Activated naive CD4-positive, alpha-beta T cell treated with anti-CD3 and anti-CD28 coated beads for 36 hours (primary cell): ENCODE measurements at regions of chr5 and their contacts with region 1.

Region 1: DNA sequence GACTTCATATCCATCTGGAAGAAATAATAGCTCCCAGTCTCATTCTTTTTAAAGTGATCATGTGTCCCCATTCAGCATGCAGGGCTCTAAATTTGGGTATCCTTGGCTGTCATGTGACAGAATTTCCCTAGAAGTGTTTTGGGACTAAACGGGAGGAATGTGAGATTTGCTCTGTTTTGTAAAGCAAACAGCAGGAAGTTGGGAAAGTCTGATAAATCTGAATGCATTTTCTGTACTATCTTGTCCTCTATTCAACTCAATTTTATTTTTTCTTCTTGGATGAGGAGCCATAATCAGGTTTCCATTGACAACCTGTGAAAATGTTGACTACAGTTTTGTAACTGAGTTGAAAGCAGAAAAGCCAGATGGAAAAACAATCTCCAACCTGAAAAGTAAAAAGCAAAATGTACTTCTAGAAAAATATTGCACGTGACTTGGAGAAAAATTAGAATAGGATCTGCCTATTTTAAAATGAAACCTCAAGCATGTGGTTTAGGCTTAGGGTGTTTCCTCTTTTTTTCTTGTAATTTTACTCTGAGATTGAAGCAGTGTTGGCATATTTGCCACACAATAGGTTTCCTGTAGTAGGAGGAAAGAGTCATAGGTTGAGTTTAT is 76.2 kb upstream of the IL6ST start:
- DNase-seq: no peak
- H3K4me3 Mint-ChIP-seq: peak overlapping the region; percentile 59
- H3K27ac Mint-ChIP-seq: peak overlapping the region; percentile 82
- H3K4me1 Mint-ChIP-seq: peaks cover 86% of the 10 kb centered on the region
- H3K27me3 Mint-ChIP-seq: no peaks in the 10 kb centered on the region

Region 2: DNA sequence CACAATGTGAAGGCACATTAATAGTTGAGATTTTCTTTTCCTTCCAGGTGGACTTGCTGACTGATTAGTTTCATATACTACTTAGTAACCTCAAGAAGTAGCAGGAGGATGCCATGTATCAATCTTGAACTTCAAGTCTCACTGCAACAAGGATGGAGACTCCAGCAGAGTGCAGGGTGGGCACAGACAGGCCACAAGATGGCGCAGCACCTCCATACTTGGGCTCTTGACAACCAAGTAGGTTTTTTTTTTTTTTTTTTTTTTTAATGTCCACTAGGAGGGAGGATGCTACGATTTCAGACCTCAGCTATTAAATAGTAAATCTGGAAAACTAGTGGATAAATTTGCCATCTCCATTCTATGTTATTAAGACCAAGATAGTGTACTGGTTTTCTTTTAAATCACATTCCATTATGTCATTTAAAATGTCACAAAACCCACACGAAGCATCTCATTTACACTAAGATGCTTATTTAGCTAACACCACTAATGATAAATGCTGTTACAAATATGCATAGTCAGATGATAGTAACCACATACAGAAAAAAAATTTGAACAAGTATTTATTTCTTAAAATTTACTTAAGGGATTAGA is 134.8 kb before region 1 on chr5:
- CTCF ChIA-PET with region 1: interaction called, 9 read pairs
- intact Hi-C with region 1: loop called (anchors 2 kb)
- DNase-seq: peak; percentile 93
- H3K4me3 Mint-ChIP-seq: no peak overlapping the region
- H3K27ac Mint-ChIP-seq: no peak overlapping the region
- H3K4me1 Mint-ChIP-seq: peaks cover 15% of the 10 kb centered on the region
- H3K27me3 Mint-ChIP-seq: no peaks in the 10 kb centered on the region

Region 3: DNA sequence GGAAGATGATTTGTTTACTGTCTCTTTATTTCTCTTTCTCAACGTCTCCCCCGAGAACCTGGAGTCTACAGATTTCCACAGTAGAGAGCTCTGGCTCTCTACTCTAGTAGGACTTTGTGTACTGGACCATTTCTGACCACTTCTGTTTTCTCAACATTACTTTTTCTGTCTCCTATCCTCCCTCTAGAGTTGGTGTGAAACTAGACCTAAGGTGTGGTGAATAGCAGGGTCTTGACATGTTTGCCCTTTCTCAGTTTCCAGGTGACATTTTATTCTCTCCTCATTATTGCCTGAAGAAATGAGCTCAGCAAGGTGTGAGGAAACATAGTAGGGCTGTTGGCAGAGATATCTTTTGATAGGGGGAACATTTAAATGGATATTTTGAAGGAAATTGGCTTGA is 14.1 kb before region 1 on chr5:
- CTCF ChIA-PET with region 1: interaction called, 5 read pairs
- intact Hi-C with region 1: loop called (anchors 1 kb)
- DNase-seq: no peak
- H3K4me3 Mint-ChIP-seq: peak overlapping the region; percentile 56
- H3K27ac Mint-ChIP-seq: peak overlapping the region; percentile 81
- H3K4me1 Mint-ChIP-seq: peaks cover 73% of the 10 kb centered on the region
- H3K27me3 Mint-ChIP-seq: no peaks in the 10 kb centered on the region

Region 4: GRCh38 chr5:56088967-56089829 is 18.2 kb after region 1 on chr5:
- CTCF ChIA-PET with region 1: interaction called, 3 read pairs
- intact Hi-C with region 1: loop called (anchors 1 kb)
- DNase-seq: peak; percentile 85
- H3K4me3 Mint-ChIP-seq: no peak overlapping the region
- H3K27ac Mint-ChIP-seq: peak overlapping the region; percentile 86
- H3K4me1 Mint-ChIP-seq: peaks cover 73% of the 10 kb centered on the region
- H3K27me3 Mint-ChIP-seq: no peaks in the 10 kb centered on the region

Region 5: DNA sequence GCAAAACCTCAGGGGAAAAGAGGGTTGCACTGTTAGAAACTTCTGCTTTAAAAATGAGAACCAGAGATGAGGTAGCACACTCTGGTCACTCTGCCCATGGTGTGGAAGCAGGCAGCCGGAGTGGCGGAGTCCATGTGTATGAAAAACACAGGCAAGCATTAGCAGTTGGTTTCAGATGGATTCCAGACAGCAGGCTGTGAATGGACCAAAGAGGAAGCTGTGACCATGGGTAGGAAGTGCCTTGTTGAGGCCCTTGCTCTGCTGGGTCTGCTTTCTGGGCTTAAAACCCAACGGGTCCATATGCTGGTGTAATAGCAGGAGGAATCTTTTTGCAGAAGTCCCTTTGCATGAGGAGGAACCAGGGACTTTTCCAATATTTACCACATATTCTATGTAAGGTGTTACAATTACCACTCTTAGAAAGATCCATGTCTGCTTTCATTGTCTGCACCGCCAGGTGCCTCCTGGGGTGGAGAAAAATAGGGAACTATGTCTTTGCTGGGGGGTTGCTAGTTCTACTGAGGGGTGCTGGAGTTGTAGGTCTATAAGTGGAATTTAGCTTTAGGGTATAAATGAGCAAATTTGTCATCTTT is 85.1 kb after region 1 on chr5:
- CTCF ChIA-PET with region 1: interaction called, 4 read pairs
- intact Hi-C with region 1: loop called (anchors 5 kb)
- DNase-seq: no peak
- H3K4me3 Mint-ChIP-seq: peak overlapping the region; percentile 79
- H3K27ac Mint-ChIP-seq: peak overlapping the region; percentile 91
- H3K4me1 Mint-ChIP-seq: peaks cover 88% of the 10 kb centered on the region
- H3K27me3 Mint-ChIP-seq: no peaks in the 10 kb centered on the region

Region 6: GRCh38 chr5:56200856-56201666 is 130.1 kb after region 1 on chr5:
- CTCF ChIA-PET with region 1: interaction called, 4 read pairs
- intact Hi-C with region 1: loop called (anchors 1 kb)
- DNase-seq: peak; percentile 83
- H3K4me3 Mint-ChIP-seq: no peak overlapping the region
- H3K27ac Mint-ChIP-seq: no peak overlapping the region
- H3K4me1 Mint-ChIP-seq: peaks cover 28% of the 10 kb centered on the region
- H3K27me3 Mint-ChIP-seq: no peaks in the 10 kb centered on the region